ENCODE measurements at regions of chr18 and their contacts with region 1.

Region 1: GRCh38 chr18:61448316-61448715 is 115.1 kb downstream of the CDH20 start:
- DNase-seq: no peak
- H3K4me3 ChIP-seq: no peak overlapping the region
- H3K27ac ChIP-seq: no peak overlapping the region
- H3K4me1 ChIP-seq: no peaks in the 10 kb centered on the region
- H3K27me3 ChIP-seq: no peaks in the 10 kb centered on the region
- CTCF ChIP-seq: no peak
- POLR2A ChIP-seq: no peak

Region 2: GRCh38 chr18:59988098-59988706 is 1460.1 kb before region 1 on chr18:
- intact Hi-C with region 1: loop called (anchors 5 kb)
- DNase-seq: no peak
- H3K4me3 ChIP-seq: no peak overlapping the region
- H3K27ac ChIP-seq: no peak overlapping the region
- H3K4me1 ChIP-seq: no peaks in the 10 kb centered on the region
- H3K27me3 ChIP-seq: no peaks in the 10 kb centered on the region
- CTCF ChIP-seq: peak; percentile 72 to 85 (median 73)
- POLR2A ChIP-seq: no peak

Region 3: GRCh38 chr18:63367053-63367953 is 1919.0 kb after region 1 on chr18 and contains the start of gene KDSR:
- intact Hi-C with region 1: no loop called
- DNase-seq: peak in 1 of 2 donors; percentile 96
- H3K4me3 ChIP-seq: peak within 1 kb of the TSS; percentile 61 to 89
- H3K27ac ChIP-seq: peak within 1 kb of the TSS; percentile 97
- H3K4me1 ChIP-seq: peaks cover 32% of the 10 kb centered on the region
- H3K27me3 ChIP-seq: no peaks in the 10 kb centered on the region
- CTCF ChIP-seq: no peak
- POLR2A ChIP-seq: peak in 1 of 2 donors; percentile 47
- total RNA-seq, gene KDSR: 42.0 TPM

Measured in vagina (tissue), 2 donors.